Activated CD4-positive, alpha-beta T cell treated with anti-CD3 and anti-CD28 coated beads for 36 hours (primary cell): ENCODE measurements at regions of chr4 and their contacts with region 1.

Region 1: GRCh38 chr4:168723020-168723419 is 226.2 kb downstream of the PALLD start:
- DNase-seq: no peak
- ATAC-seq: peak; percentile 24
- H3K4me3 Mint-ChIP-seq: no peak overlapping the region
- H3K27ac Mint-ChIP-seq: peak overlapping the region; percentile 27
- H3K4me1 Mint-ChIP-seq: peaks cover 25% of the 10 kb centered on the region
- H3K27me3 Mint-ChIP-seq: peaks cover 8% of the 10 kb centered on the region

Region 2: DNA sequence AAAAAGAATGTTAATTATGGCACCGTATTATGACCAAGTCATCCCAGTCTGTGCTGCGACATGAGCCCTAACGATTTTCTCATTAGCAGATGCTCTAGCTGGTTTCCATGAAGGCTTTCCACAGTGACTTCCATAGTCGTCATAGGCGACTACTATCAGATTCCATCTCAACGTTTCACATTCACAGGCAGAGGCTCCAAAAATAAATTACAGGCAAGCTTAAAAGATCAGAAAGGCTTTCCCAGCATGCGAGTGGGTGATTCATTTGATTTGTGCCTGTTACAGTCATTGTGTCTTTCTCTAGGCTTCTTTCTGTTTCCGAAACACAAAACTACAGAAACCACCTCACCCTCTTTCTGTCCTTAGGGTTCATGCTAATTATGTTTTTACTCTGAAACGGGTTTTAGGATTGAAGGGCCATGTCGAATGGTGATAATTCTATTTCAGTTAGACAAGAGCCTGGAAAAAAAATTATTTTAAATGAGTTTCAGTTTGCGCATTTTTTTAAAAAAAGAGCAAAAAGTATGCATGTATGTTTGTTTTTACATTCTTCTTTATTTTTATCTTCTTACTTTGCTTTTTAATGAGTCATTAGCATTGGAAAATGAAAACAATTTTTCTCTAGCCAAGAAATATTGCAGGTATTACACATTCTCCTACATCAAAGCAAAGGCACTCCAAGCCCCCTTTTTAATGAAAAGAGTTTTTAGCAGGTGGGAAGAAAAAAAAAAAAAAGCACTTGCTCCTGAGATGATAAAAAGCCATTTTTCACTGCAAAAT is 182.7 kb before region 1 on chr4:
- CTCF ChIA-PET with region 1: no interaction called
- POLR2A ChIA-PET with region 1: no interaction called
- intact Hi-C with region 1: loop called in 1 of 2 experiments (anchors 1 kb)
- DNase-seq: peak; percentile 30
- ATAC-seq: peak; percentile 91
- H3K4me3 Mint-ChIP-seq: no peak overlapping the region
- H3K27ac Mint-ChIP-seq: no peak overlapping the region
- H3K4me1 Mint-ChIP-seq: peaks cover 11% of the 10 kb centered on the region
- H3K27me3 Mint-ChIP-seq: peaks cover 7% of the 10 kb centered on the region

Region 3: GRCh38 chr4:168864821-168865541 is 142.0 kb after region 1 on chr4:
- CTCF ChIA-PET with region 1: no interaction called
- POLR2A ChIA-PET with region 1: no interaction called
- intact Hi-C with region 1: loop called (anchors 1 to 5 kb)
- DNase-seq: no peak
- ATAC-seq: no peak
- H3K4me3 Mint-ChIP-seq: no peak overlapping the region
- H3K27ac Mint-ChIP-seq: no peak overlapping the region
- H3K4me1 Mint-ChIP-seq: peaks cover 47% of the 10 kb centered on the region
- H3K27me3 Mint-ChIP-seq: peaks cover 6% of the 10 kb centered on the region